Panc1 (cell line): ENCODE measurements at regions of chr16 and their contacts with region 1.

Region 1: DNA sequence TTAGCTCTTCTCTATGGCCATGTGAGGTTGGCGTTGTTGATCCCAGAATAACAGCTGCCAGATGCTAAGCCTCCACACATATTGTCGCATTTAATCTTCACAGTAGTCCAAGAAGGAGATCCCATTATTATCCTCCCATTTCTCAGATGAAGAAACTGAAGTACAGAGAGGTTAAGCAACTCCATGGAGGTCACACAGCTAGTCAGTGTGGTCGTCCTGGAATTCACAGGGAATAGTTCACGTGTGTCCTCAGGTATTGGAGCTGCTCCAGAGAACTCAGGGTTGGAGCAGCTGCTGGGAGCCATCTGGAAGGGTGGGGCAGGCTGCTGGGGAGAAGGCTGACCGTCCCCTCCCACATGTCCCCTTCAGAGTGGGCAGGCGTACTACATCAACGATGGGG is 19.5 kb downstream of the SDR42E2 start:
- DNase-seq: no peak
- ATAC-seq: no peak
- H3K4me3 ChIP-seq: no peak overlapping the region
- H3K27ac ChIP-seq: no peak overlapping the region
- H3K4me1 ChIP-seq: no peaks in the 10 kb centered on the region
- H3K27me3 ChIP-seq: 0 out of 2 replicates have a peak, but pooled peaks cover 2% of the 10 kb centered on the region
- CTCF ChIP-seq: no peak

Region 2: DNA sequence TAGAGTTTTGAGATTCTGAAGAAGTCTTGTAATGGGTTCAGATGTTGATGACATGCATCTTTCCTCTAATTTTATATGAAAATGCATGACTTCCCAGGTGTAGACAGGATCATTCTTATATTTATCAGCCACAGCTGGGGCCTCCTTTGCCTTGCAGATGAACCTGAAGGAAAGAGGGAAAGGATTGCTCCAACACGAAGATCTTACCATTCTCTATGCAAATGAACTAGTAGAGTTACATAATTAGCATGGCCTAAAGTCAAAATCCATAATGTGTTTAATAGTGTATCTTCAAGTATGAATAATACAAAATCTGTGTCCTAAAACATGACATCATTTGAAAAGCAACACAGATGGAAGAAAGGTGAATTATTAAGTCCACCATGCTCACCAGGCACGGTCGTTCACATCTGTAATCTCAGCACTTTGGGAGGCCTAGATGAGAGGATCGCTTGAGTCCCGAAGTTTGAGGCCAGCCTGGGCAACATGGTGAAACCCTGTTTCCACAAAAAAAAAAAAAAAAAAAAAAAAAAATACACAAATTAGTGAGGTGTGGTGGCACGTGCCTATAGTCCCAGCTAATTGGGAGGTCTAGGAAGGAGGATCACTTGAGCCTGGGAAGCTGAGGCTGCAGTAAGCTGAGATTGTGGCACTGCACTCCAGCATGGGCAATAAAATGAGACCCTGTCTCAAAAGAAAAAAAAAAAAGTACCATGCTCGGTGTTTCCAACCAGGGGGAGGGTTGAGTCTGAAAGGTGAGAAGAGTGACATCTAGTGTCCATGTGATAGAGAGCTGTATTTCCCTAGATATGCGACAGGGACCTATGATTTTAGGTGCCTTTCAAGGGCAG is 83.2 kb before region 1 on chr16:
- CTCF ChIA-PET with region 1: interaction called, 15 read pairs
- POLR2A ChIA-PET with region 1: no interaction called
- in situ Hi-C with region 1: loop called (anchors 25 kb)
- intact Hi-C with region 1: loop called (anchors 5 kb)
- DNase-seq: peak; percentile 41
- ATAC-seq: peak; percentile 95
- H3K4me3 ChIP-seq: peak overlapping the region in 1 of 2 experiments; percentile 44; a peak in 2 of 4 replicates
- H3K27ac ChIP-seq: no peak overlapping the region
- H3K4me1 ChIP-seq: no peaks in the 10 kb centered on the region
- H3K27me3 ChIP-seq: no peaks in the 10 kb centered on the region
- CTCF ChIP-seq: peak; percentile 85